ENCODE measurements at regions of chr3 and their contacts with region 1.

Region 1: GRCh38 chr3:172673210-172673679 is 37.6 kb downstream of the NCEH1 start:
- DNase-seq: peak; percentile 82
- ATAC-seq: peak; percentile 81
- H3K4me3 Mint-ChIP-seq: no peak overlapping the region
- H3K27ac Mint-ChIP-seq: no peak overlapping the region
- H3K4me1 Mint-ChIP-seq: peaks cover 16% of the 10 kb centered on the region
- H3K27me3 Mint-ChIP-seq: no peaks in the 10 kb centered on the region

Region 2: DNA sequence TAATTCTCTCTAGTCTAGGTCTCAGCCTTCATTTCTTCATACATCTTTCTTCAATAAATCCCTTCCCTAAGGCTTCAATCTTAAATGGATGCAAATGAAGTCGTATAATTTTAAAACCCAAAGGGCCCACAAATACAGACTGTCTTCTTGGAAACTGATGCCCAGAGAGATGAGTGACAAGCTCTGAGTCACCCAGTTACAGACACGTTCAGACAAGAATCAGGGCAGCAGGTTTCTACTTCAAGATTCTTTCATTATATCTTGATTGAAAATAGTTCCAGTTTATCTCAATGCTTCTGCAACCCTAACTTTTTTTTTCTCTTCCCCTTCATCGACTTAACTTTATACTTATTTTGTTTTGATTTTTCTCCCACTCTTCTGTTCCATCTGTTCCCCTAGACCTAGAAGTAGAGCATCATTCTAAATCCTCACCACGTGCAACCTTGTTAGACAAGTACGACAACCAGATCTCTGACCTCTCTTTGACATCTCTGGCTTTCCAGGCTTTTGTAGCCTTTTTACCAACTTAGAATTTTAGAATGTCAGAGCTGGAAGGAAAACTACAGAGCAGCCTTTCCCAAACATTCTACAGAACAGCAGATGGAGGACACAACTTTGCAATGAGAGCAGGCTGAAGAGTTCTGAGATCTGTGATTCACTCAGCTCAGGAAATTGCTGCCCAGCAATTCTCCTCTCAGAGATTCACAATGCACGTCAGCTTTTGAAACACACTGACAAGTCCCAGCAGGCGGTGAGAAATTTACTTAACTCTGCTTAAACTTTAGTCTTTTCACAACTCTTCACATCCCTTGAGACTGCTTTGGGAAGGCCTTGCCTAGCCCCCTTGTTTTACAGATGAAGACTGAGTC is 12.3 kb after region 1 on chr3:
- CTCF ChIA-PET with region 1: interaction called, 18 read pairs
- POLR2A ChIA-PET with region 1: no interaction called
- DNase-seq: no peak
- ATAC-seq: no peak
- H3K4me3 Mint-ChIP-seq: no peak overlapping the region
- H3K27ac Mint-ChIP-seq: no peak overlapping the region
- H3K4me1 Mint-ChIP-seq: peaks cover 7% of the 10 kb centered on the region
- H3K27me3 Mint-ChIP-seq: no peaks in the 10 kb centered on the region

Region 3: GRCh38 chr3:172692751-172693338 is 19.6 kb after region 1 on chr3:
- CTCF ChIA-PET with region 1: interaction called, 26 read pairs
- POLR2A ChIA-PET with region 1: no interaction called
- DNase-seq: no peak
- ATAC-seq: peak; percentile 27
- H3K4me3 Mint-ChIP-seq: no peak overlapping the region
- H3K27ac Mint-ChIP-seq: peak overlapping the region; percentile 54
- H3K4me1 Mint-ChIP-seq: peaks cover 18% of the 10 kb centered on the region
- H3K27me3 Mint-ChIP-seq: no peaks in the 10 kb centered on the region

Region 4: DNA sequence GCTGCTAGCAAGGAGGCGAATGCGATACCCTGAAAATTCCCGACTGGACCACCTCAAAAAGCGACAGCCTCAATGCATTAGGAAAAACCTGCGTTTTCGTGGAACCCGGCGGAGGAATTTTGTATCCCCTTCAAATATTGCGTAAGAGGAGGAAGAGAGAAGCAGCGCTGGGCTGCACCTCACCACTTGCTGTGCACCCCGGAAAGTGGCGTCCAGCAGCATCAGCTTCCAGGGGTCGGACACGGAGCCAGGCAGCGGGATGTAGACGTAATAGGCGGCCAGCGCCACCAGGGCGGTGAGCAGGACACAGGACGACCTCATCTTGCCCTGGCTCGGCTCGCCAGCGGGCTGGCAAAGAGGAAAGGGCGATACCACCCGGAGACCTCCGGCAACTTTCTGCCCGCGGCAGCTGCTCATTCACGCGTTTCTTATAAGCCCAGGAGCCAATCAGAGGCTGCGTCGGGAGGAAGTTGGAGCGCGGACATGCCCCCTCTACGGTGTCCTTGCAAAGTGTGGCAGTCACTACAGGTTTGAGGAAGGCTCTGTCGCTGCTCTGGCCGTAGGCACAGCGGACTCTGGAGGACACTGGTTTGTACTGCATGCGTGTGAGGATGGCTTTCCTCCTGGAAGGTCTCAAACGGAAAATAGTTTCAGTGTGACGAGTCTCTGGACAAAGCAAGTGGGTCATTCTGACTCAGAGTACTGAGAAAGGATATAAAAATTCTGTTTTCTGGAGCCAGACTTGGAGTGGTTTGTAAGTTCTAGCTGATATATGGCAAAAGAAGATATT is 37.6 kb after region 1 on chr3 and contains the start of gene NCEH1:
- CTCF ChIA-PET with region 1: interaction called, 38 read pairs
- POLR2A ChIA-PET with region 1: no interaction called
- DNase-seq: peak; percentile 88
- ATAC-seq: peak; percentile 99
- H3K4me3 Mint-ChIP-seq: peak within 1 kb of the TSS; percentile 92
- H3K27ac Mint-ChIP-seq: peak within 1 kb of the TSS; percentile 73
- H3K4me1 Mint-ChIP-seq: peaks cover 18% of the 10 kb centered on the region
- H3K27me3 Mint-ChIP-seq: peaks cover 3% of the 10 kb centered on the region
- total RNA-seq, gene NCEH1: 8.0 to 8.2 TPM

Region 5: DNA sequence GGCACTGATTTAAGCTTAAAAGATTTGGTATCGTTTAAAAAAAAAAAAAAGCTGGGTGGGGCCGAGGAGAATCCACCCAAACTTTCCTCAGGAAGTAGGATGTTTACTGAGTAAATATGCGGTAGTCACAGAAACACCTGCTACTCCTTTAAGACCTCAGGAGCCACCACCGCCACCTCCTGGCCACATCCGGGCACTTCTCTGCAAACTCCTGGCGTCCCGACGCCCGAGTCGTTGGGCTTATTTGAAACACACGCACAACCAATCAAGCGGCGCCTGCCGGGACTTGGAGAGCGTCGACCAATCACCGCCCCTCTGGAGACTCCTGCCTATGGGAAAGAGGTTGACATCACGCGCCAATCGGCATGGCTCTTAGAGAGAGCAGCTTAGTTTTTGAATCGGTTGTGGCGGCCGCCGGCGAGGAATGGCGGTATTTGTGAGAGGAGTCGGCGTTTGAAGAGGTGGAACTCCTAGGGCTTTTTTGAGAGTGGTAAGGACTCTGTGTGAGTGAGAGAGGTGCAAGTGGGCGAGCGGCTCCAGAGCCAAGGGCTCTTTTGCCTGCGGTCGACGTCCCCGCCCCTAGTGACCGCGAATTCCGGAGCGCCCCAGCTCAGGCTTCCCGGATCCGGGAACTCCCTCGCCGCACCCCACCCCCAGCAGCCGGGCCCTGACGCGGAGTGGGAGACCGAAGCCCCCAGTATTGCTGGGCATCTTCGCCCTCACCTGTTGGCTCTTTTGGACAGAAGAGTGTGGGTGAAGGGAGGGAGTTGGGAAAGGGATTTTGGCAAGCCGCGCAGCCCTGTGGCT is 77.3 kb after region 1 on chr3 and contains the start of gene ECT2:
- CTCF ChIA-PET with region 1: interaction called, 40 read pairs
- POLR2A ChIA-PET with region 1: no interaction called
- DNase-seq: peak; percentile 99
- ATAC-seq: peak; percentile 98
- H3K4me3 Mint-ChIP-seq: peak within 1 kb of the TSS; percentile 99
- H3K27ac Mint-ChIP-seq: peak within 1 kb of the TSS; percentile 98
- H3K4me1 Mint-ChIP-seq: peaks cover 38% of the 10 kb centered on the region
- H3K27me3 Mint-ChIP-seq: peaks cover 11% of the 10 kb centered on the region
- total RNA-seq, gene ECT2: 57.2 to 70.1 TPM

Measured in activated CD8-positive, alpha-beta T cell treated with anti-CD3 and anti-CD28 coated beads, Interleukin-2, amount 10 ng/mL, durations not matched to agents 7 days and 5 days (primary cell).